Activated T-helper 1 cell treated with anti-CD3 and anti-CD28 coated beads, Interleukin-12 subunit alpha, Interleukin-12 subunit beta, Interleukin-2, Interleukin-4 antibody, amounts not matched to agents 30 ng/mL and 10 ng/mL and 1 ng/mL, durations not matched to agents 14 hours and 24 hours and 36 hours (primary cell): ENCODE measurements at regions of chr11 and their contacts with region 1.

Region 1: GRCh38 chr11:48109046-48109666 is 107.5 kb upstream of the OR4B1 start:
- DNase-seq: no peak
- H3K4me3 Mint-ChIP-seq: peak overlapping the region; percentile 54
- H3K27ac Mint-ChIP-seq: peak overlapping the region; percentile 88
- H3K4me1 Mint-ChIP-seq: peaks cover 68% of the 10 kb centered on the region
- H3K27me3 Mint-ChIP-seq: no peaks in the 10 kb centered on the region

Region 2: GRCh38 chr11:47932544-47932943 is 176.6 kb before region 1 on chr11:
- intact Hi-C with region 1: loop called (anchors 1 kb)
- DNase-seq: no peak
- H3K4me3 Mint-ChIP-seq: no peak overlapping the region
- H3K27ac Mint-ChIP-seq: no peak overlapping the region
- H3K4me1 Mint-ChIP-seq: peaks cover 23% of the 10 kb centered on the region
- H3K27me3 Mint-ChIP-seq: no peaks in the 10 kb centered on the region

Region 3: DNA sequence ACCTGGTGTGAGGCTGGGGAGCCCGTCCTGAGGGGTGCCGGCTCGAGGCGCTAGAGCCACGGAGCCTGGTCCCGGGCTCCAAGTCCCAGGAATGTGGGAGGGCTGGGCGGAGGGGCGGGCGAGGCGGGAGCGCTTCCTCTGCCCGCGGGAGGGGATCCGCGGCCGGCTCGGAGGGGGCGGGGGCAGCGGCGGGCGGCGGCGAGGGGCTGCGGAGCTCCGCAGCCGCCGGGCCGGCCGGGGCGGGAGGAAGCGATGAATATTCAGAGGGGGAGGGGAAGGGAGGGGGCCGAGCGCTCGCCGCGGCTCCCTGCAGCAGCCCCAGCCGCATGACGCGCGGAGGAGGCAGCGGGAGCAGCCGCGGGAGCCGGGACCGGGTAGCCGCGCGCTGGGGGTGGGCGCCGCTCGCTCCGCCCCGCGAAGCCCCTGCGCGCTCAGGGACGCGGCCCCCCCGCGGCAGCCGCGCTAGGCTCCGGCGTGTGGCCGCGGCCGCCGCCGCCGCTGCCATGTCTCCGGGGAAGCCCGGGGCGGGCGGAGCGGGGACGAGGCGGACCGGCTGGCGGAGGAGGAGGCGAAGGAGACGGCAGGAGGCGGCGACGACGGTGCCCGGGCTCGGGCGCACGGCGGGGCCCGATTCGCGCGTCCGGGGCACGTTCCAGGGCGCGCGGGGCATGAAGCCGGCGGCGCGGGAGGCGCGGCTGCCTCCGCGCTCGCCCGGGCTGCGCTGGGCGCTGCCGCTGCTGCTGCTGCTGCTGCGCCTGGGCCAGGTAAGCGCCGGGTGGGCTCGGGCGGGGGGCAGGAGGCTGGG is 128.7 kb before region 1 on chr11 and contains the start of gene PTPRJ:
- intact Hi-C with region 1: loop called (anchors 1 kb)
- DNase-seq: peak; percentile 60
- H3K4me3 Mint-ChIP-seq: peak within 1 kb of the TSS; percentile 92
- H3K27ac Mint-ChIP-seq: peak within 1 kb of the TSS; percentile 54
- H3K4me1 Mint-ChIP-seq: peaks cover 26% of the 10 kb centered on the region
- H3K27me3 Mint-ChIP-seq: peaks cover 12% of the 10 kb centered on the region
- total RNA-seq, gene PTPRJ: 69.6 and 70.3 TPM in 2 replicates

Region 4: GRCh38 chr11:48020092-48020755 is 88.9 kb before region 1 on chr11:
- intact Hi-C with region 1: loop called (anchors 1 kb)
- DNase-seq: peak; percentile 38
- H3K4me3 Mint-ChIP-seq: peak overlapping the region; percentile 46
- H3K27ac Mint-ChIP-seq: peak overlapping the region; percentile 90
- H3K4me1 Mint-ChIP-seq: peaks cover 79% of the 10 kb centered on the region
- H3K27me3 Mint-ChIP-seq: no peaks in the 10 kb centered on the region

Region 5: DNA sequence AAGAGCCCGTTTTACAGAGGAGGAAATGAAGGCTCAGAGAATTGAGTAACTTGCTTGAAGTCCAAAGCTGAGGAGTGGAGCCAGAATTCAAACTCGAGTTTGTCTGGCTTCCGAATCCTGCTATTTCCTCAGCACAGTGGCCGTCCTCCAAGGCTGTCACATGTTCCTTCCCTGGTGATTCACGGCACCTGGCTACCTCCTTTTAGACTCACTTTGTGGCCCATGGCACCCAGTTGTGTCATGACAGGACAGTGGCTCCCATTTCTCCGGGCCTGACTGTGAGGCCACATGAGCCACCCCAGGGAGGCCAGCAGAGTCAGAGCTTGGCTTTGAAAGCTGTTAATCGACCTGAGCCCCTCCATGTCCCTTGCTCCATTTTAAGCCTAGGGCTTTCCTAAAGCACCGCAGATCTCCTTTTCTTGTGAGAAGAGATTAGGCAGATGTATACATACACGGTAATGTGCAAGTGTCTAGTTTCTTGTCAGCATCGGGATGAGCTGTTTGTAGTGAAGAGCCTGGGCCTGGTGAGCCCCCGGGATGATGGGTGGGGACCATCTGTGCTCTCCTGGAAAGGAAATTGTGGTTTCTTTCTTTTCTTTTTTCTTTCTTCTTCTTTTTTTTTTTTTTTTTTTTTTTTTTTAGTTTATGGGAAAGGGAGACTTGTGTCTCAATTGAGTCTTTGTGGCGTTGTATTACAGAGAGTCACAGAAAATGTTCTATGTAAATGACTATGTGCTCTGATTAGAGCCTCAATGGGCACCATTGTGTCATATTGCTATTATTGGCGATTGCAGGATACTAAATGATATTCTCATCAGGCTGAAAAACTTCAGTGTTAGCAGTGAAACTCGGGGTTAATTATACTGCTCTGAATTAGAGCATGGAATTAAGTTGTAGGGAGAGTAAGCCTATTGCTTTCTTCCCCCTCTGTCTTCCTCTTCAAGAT is 74.0 kb before region 1 on chr11:
- intact Hi-C with region 1: no loop called
- DNase-seq: no peak
- H3K4me3 Mint-ChIP-seq: peak overlapping the region; percentile 50
- H3K27ac Mint-ChIP-seq: peak overlapping the region; percentile 59
- H3K4me1 Mint-ChIP-seq: peaks cover 75% of the 10 kb centered on the region
- H3K27me3 Mint-ChIP-seq: no peaks in the 10 kb centered on the region

Region 6: DNA sequence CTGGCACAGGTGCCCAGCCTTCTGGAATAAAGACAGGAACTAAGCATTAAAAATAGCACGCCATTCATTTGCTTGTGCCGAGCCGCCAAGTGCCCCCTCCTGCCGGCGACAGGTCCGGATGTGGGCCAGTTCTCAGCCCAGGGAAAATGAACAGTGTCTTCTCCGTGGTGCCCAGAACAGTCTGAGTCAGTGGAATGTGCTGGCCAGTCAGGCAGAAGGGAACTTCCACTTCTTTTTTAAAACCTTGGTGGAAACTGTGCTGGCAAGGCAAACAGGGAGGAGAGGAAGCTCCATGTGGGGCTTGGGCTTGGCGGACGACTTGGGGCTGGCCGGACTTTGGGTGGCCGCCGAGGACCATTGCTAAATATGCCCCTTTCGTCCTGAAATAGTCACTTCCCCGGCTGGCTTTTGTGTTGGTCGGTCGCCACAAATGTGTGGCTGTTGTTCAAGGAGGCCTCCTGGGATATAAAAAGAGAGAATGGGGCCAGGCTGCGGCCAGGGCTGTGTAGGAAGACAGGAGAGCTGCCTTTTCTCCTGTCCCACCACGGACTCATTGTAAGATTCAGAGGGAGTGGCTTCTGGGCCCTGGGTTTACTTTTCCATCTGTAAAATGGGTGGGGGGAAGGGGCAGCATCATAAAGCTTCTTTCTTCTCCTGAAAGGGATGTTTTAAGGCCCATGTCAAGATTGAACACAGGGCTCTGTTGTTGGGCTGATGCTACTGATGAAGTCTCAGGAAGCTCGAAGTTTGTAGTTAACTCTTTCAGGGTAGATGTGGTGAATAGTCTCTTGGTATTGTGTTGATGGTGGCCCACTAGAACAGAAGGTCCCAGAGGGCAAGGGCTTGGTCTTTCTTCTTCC is 27.8 kb before region 1 on chr11:
- intact Hi-C with region 1: loop called (anchors 2 kb)
- DNase-seq: peak; percentile 16
- H3K4me3 Mint-ChIP-seq: peak overlapping the region; percentile 5
- H3K27ac Mint-ChIP-seq: peak overlapping the region; percentile 72
- H3K4me1 Mint-ChIP-seq: peaks cover 56% of the 10 kb centered on the region
- H3K27me3 Mint-ChIP-seq: no peaks in the 10 kb centered on the region

Region 7: GRCh38 chr11:48097041-48097476 is 12.1 kb before region 1 on chr11:
- intact Hi-C with region 1: loop called (anchors 1 kb)
- DNase-seq: no peak
- H3K4me3 Mint-ChIP-seq: peak overlapping the region; percentile 55
- H3K27ac Mint-ChIP-seq: peak overlapping the region; percentile 87
- H3K4me1 Mint-ChIP-seq: peaks cover 72% of the 10 kb centered on the region
- H3K27me3 Mint-ChIP-seq: no peaks in the 10 kb centered on the region

Region 8: DNA sequence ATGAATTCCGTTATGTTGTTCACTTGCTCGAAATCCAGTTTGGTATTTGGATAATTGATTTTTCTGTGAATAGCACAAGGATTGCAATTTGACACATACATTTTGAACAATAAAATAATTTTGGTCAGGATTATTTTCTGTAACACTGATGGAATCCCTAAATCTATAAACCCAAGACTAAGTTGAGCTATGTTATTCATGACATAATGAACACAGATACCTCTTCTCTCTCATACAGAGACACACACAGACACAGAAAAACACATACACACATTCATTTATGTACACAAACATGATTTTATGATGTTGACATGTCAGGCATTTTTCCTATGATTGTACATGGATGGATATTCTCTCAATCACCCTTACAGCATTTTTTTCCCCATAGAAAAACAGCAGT is 257.2 kb after region 1 on chr11 and contains the start of gene OR4C5:
- intact Hi-C with region 1: no loop called
- DNase-seq: no peak
- H3K4me3 Mint-ChIP-seq: no peak within 1 kb of the TSS
- H3K27ac Mint-ChIP-seq: no peak within 1 kb of the TSS
- H3K4me1 Mint-ChIP-seq: no peaks in the 10 kb centered on the region
- H3K27me3 Mint-ChIP-seq: no peaks in the 10 kb centered on the region
- total RNA-seq, gene OR4C5: not detected in 2 replicates